ENCODE measurements at regions of chr5 and their contacts with region 1.

Region 1: DNA sequence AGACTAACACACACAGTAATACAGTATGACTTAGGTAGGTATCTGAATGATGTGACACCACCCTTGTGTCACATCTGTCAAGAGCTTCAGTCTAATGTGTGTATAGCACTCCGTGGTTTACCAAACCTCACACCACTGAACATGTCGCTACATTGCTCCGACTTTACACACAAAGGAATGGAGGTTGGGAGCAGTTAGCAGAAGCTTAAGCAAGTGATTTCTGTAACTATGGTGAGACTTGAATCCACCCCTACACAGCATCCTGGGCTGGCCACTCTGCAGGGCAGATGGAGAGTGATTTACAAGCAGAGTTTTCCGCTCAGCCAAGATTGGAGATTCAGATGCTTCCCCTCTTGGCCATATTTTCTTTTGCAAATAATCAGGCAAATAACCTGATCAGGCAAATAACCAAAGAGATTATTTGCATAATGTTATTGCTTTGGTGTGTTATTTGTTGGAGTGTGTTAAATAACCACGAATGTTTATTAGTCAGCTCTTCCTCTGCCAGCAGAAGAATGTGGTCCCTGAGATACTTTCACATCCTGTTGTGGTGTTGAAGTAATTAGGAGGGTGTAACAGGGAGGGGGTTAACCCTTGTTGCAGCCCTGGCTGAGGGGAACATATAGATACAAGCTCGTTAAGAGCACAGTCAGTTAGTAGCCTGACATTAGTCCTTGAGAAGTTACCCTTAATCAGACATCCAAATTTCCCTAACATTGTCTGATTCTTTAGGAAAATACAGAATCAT is 92.8 kb downstream of the SNX18 start:
- DNase-seq: peak; percentile 85
- ATAC-seq: peak; percentile 95
- H3K4me3 ChIP-seq: peak overlapping the region in 2 of 5 experiments; percentile 9 to 45
- H3K4me3 Mint-ChIP-seq: peak overlapping the region; percentile 52
- H3K27ac ChIP-seq: peak overlapping the region; percentile 50 to 57
- H3K27ac Mint-ChIP-seq: peak overlapping the region; percentile 82
- H3K4me1 ChIP-seq: peaks cover 32 to 34% of the 10 kb centered on the region in 2 donors
- H3K4me1 Mint-ChIP-seq: peaks cover 46% of the 10 kb centered on the region
- H3K27me3 ChIP-seq: no peaks in the 10 kb centered on the region
- H3K27me3 Mint-ChIP-seq: no peaks in the 10 kb centered on the region
- CTCF ChIP-seq: no peak

Region 2: GRCh38 chr5:53944981-53945380 is 665.4 kb before region 1 on chr5:
- CTCF ChIA-PET with region 1: no interaction called
- POLR2A ChIA-PET with region 1: no interaction called
- intact Hi-C with region 1: no loop called
- DNase-seq: no peak
- ATAC-seq: no peak
- H3K4me3 ChIP-seq: no peak overlapping the region
- H3K4me3 Mint-ChIP-seq: no peak overlapping the region
- H3K27ac ChIP-seq: no peak overlapping the region
- H3K27ac Mint-ChIP-seq: no peak overlapping the region
- H3K4me1 ChIP-seq: no peaks in the 10 kb centered on the region
- H3K4me1 Mint-ChIP-seq: no peaks in the 10 kb centered on the region
- H3K27me3 ChIP-seq: no peaks in the 10 kb centered on the region
- H3K27me3 Mint-ChIP-seq: no peaks in the 10 kb centered on the region
- CTCF ChIP-seq: no peak

Region 3: GRCh38 chr5:54646356-54647101 is 36.2 kb after region 1 on chr5:
- CTCF ChIA-PET with region 1: interaction called, 4 read pairs
- POLR2A ChIA-PET with region 1: no interaction called
- intact Hi-C with region 1: loop called (anchors 1 kb)
- DNase-seq: peak; percentile 88
- ATAC-seq: peak; percentile 89
- H3K4me3 ChIP-seq: peak overlapping the region; percentile 7 to 49 (median 41)
- H3K4me3 Mint-ChIP-seq: peak overlapping the region; percentile 79
- H3K27ac ChIP-seq: peak overlapping the region; percentile 87 to 88
- H3K27ac Mint-ChIP-seq: peak overlapping the region; percentile 98
- H3K4me1 ChIP-seq: peaks cover 61 to 67% of the 10 kb centered on the region in 2 donors
- H3K4me1 Mint-ChIP-seq: peaks cover 68% of the 10 kb centered on the region
- H3K27me3 ChIP-seq: no peaks in the 10 kb centered on the region
- H3K27me3 Mint-ChIP-seq: no peaks in the 10 kb centered on the region
- CTCF ChIP-seq: no peak

Region 4: GRCh38 chr5:54673523-54674225 is 63.3 kb after region 1 on chr5:
- CTCF ChIA-PET with region 1: interaction called, 4 read pairs
- POLR2A ChIA-PET with region 1: no interaction called
- intact Hi-C with region 1: loop called (anchors 1 kb)
- DNase-seq: peak; percentile 74
- ATAC-seq: peak; percentile 91
- H3K4me3 ChIP-seq: no peak overlapping the region
- H3K4me3 Mint-ChIP-seq: peak overlapping the region; percentile 43
- H3K27ac ChIP-seq: peak overlapping the region; percentile 26 to 62
- H3K27ac Mint-ChIP-seq: peak overlapping the region; percentile 47
- H3K4me1 ChIP-seq: peaks cover 68 to 76% of the 10 kb centered on the region in 2 donors
- H3K4me1 Mint-ChIP-seq: peaks cover 75% of the 10 kb centered on the region
- H3K27me3 ChIP-seq: no peaks in the 10 kb centered on the region
- H3K27me3 Mint-ChIP-seq: no peaks in the 10 kb centered on the region
- CTCF ChIP-seq: no peak

Region 5: DNA sequence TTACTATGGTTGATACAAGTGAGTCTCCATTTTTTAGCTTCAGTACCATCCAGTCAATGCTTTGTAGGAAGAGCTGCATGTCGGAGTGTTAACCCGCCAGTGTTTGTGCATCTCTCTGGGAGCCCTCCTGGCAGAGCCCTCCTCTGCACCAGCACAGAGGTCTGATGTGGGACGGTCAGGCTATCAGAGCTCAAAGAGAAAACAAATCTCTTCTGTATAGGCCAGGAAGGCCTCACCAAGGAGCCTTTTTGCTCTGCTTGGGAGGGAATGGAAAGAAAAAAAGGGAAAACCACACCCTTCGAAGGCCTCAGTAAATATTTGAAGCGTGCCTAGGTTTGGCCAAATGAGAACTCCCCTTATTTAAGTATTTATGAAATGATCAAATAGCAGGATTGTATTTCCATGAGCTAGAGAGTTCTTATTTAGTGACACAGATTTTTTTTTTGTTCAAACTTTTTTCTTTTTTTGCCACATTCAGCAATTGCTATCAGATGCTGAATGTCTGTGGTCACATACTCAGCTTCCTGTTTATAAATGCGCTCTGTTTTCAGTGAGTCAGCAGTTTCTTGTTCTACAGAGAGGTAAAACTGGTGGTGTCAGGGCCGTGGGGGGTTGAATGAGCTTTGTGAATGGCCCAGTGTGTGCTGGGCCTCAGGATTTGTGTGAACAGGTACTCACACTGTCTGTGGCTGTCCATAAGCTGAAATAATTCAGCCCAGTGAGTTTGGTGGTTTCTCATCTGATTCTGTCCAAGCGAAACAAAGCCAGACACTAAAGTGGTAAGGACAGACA is 133.8 kb after region 1 on chr5:
- CTCF ChIA-PET with region 1: interaction called, 7 read pairs
- POLR2A ChIA-PET with region 1: no interaction called
- intact Hi-C with region 1: loop called (anchors 1 kb)
- DNase-seq: peak; percentile 51
- ATAC-seq: peak; percentile 81
- H3K4me3 ChIP-seq: no peak overlapping the region
- H3K4me3 Mint-ChIP-seq: peak overlapping the region; percentile 68
- H3K27ac ChIP-seq: no peak overlapping the region
- H3K27ac Mint-ChIP-seq: peak overlapping the region; percentile 75
- H3K4me1 ChIP-seq: peaks cover 20 to 26% of the 10 kb centered on the region in 2 donors
- H3K4me1 Mint-ChIP-seq: peaks cover 42% of the 10 kb centered on the region
- H3K27me3 ChIP-seq: peaks cover 0 to 2% (median 0%) of the 10 kb centered on the region in 4 experiments
- H3K27me3 Mint-ChIP-seq: no peaks in the 10 kb centered on the region
- CTCF ChIP-seq: no peak

Region 6: GRCh38 chr5:55894135-55894534 is 1283.8 kb after region 1 on chr5:
- CTCF ChIA-PET with region 1: no interaction called
- POLR2A ChIA-PET with region 1: no interaction called
- intact Hi-C with region 1: no loop called
- DNase-seq: no peak
- ATAC-seq: no peak
- H3K4me3 ChIP-seq: no peak overlapping the region
- H3K4me3 Mint-ChIP-seq: no peak overlapping the region
- H3K27ac ChIP-seq: no peak overlapping the region
- H3K27ac Mint-ChIP-seq: no peak overlapping the region
- H3K4me1 ChIP-seq: no peaks in the 10 kb centered on the region
- H3K4me1 Mint-ChIP-seq: no peaks in the 10 kb centered on the region
- H3K27me3 ChIP-seq: peaks cover 0 to 5% (median 3%) of the 10 kb centered on the region in 4 experiments
- H3K27me3 Mint-ChIP-seq: peaks cover 10% of the 10 kb centered on the region
- CTCF ChIP-seq: no peak